Panc1 (cell line): ENCODE measurements at regions of chr3 and their contacts with region 1.

Region 1: GRCh38 chr3:156509189-156510174 is 45.4 kb downstream of the SSR3 start:
- DNase-seq: peak; percentile 30
- ATAC-seq: peak; percentile 88
- H3K4me3 ChIP-seq: no peak overlapping the region
- H3K27ac ChIP-seq: no peak overlapping the region
- H3K4me1 ChIP-seq: no peaks in the 10 kb centered on the region
- H3K27me3 ChIP-seq: peaks cover 3% of the 10 kb centered on the region; the same call in 1 of the 2 replicates
- CTCF ChIP-seq: peak; percentile 72

Region 2: DNA sequence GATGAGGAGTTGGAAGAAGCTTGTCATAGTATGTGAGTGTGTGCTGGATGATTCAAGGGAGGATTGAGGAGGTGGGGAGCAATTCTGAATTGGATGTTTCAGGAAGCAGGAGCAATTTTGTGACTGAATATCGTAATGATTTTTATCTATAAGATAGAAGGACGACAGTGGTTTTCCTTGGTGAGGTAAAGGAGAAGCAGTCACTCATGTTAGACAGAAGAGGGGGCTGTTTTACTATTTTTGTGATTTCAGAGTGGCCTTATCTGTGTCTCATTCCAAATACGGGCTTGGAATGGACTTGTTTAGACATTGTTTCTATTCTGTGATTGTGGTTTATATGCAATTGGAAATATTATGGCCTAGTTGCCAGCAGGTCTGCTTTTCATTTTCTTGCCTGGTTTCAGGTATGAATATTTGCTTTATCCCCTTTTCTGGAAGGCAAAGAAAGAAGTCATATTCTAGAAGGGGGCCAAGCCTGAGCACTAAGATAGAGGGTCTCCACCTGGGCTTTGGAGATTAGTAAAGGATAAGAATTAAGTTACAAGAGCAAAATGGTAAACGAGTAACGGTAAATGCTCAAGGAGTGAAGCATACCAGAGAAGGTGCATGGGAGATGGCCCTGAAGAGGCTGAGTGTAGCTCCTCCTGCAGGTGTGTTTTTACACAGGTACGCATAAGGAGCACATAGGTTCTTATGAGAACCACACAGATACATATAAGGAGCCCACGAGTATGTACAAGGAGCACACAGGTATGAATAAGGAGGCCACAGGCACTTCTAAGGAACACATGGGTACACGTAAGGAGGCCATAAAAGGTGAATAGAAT is 513.7 kb before region 1 on chr3:
- CTCF ChIA-PET with region 1: no interaction called
- POLR2A ChIA-PET with region 1: no interaction called
- in situ Hi-C with region 1: no loop called
- intact Hi-C with region 1: loop called (anchors 10 kb)
- DNase-seq: peak; percentile 5
- ATAC-seq: peak; percentile 93
- H3K4me3 ChIP-seq: no peak overlapping the region
- H3K27ac ChIP-seq: no peak overlapping the region
- H3K4me1 ChIP-seq: no peaks in the 10 kb centered on the region
- H3K27me3 ChIP-seq: peaks cover 6% of the 10 kb centered on the region
- CTCF ChIP-seq: peak; percentile 62

Region 3: DNA sequence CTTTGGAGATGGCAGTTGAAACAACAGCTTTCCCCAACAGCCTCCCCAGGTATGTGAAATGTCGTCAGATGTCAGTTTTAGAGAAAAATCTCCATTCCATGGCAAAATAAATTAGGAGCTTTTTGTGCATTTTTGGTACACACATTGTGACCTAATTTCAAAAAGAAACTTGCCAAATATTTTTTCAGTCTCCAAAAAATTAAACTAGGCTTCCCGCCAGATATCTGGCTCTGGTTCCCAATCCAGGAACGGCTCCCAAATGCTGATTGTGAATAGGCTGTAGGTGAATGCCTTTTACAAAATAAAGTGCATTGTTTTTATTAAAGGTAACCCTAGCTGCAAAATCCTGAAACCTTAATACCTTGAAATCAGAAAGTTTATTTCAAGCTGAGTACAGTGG is 378.2 kb before region 1 on chr3:
- CTCF ChIA-PET with region 1: no interaction called
- POLR2A ChIA-PET with region 1: no interaction called
- in situ Hi-C with region 1: no loop called
- intact Hi-C with region 1: no loop called
- DNase-seq: no peak
- ATAC-seq: no peak
- H3K4me3 ChIP-seq: no peak overlapping the region
- H3K27ac ChIP-seq: no peak overlapping the region
- H3K4me1 ChIP-seq: no peaks in the 10 kb centered on the region
- H3K27me3 ChIP-seq: peaks cover 3% of the 10 kb centered on the region; the same call in 1 of the 2 replicates
- CTCF ChIP-seq: no peak

Region 4: DNA sequence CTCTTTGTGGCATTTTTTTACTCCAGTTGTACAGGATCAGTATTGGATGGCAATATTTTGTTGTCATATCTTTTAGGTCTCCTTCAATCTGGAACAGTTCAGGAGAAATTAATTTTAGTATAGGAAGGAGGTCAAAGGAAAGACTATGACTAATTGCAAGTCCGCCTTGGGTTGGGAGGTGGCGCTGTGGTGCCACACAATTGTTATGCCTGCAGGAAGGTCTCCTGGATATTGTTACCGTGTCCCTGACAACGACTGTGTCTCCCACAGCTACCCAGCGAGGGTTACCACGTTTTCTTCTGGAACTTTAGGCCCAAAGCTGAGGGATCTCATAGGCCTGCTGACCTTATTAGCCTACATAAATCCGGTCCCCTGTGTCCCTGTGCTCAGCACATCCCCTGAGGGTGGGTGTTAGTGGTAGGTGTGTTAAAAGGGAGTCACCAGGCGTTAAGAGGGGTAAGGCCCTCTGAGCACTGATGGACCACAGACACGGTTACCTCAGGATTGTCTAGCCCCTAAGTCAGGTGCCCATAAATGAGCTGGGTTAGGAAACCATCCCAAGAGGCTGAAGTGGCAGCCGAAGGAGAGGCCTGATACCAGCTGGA is 357.6 kb before region 1 on chr3:
- CTCF ChIA-PET with region 1: interaction called, 9 read pairs
- POLR2A ChIA-PET with region 1: no interaction called
- in situ Hi-C with region 1: no loop called
- intact Hi-C with region 1: loop called (anchors 1 kb)
- DNase-seq: peak; percentile 28
- ATAC-seq: peak; percentile 85
- H3K4me3 ChIP-seq: no peak overlapping the region
- H3K27ac ChIP-seq: no peak overlapping the region
- H3K4me1 ChIP-seq: no peaks in the 10 kb centered on the region
- H3K27me3 ChIP-seq: no peaks in the 10 kb centered on the region
- CTCF ChIP-seq: peak; percentile 92

Region 5: DNA sequence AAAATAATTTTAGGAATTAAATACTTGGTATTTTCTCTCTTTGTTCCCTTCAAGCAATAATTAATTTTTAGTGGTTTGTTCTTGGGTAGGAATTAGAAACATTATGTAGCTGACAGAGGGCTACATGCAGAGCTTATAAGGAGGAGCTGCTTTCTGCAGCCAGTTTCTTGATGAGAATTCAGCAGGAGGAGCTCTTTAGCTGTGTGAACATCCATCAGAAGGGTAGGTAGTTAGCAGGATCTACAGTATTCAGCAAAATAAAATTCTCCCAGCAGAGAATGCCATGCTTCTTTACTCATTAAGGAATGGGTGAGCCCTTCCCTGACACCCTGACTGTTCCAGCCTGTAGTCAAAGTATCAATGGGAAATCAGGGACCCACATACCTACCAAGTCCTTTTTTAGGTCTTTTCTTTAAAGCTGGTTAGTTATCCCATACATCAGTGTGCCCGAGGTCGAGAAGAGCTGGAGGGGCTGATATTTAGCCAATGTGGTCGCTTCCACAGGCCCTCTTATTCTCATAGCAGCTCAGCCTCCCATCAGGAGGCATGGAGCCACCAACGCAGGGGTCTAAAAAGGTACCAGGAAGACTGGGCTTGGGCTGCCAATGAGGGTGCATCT is 335.1 kb before region 1 on chr3:
- CTCF ChIA-PET with region 1: interaction called, 3 read pairs
- POLR2A ChIA-PET with region 1: no interaction called
- in situ Hi-C with region 1: no loop called
- intact Hi-C with region 1: loop called (anchors 5 kb)
- DNase-seq: no peak
- ATAC-seq: 0 out of 2 replicates have a peak, but pooled peaks have one; percentile 58
- H3K4me3 ChIP-seq: no peak overlapping the region
- H3K27ac ChIP-seq: no peak overlapping the region
- H3K4me1 ChIP-seq: no peaks in the 10 kb centered on the region
- H3K27me3 ChIP-seq: peaks cover under 1% of the 10 kb centered on the region; the same call in 1 of the 2 replicates
- CTCF ChIP-seq: peak; percentile 32; the same call in 1 of the 2 replicates

Region 6: DNA sequence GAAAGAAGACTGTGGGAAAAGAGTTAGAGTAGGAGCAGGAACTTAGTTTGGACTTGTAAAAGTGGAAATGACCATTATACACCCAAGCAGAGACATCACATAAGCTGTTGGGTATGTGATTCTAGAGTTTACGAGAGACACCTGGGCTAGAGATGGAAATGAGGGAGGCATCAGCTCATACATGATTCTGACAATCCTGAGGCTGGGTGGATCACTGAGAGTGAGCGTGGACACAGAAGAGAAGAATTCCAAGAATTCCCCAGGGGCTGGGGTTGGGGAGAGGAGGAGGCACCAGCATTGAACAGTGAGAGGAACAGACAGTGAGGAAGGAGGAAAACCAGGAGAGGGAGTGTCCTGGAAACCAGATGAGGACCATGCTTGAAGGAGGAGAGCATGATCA is 275.6 kb before region 1 on chr3:
- CTCF ChIA-PET with region 1: no interaction called
- POLR2A ChIA-PET with region 1: interaction called, 12 read pairs
- in situ Hi-C with region 1: no loop called
- intact Hi-C with region 1: no loop called
- DNase-seq: no peak
- ATAC-seq: no peak
- H3K4me3 ChIP-seq: no peak overlapping the region
- H3K27ac ChIP-seq: no peak overlapping the region
- H3K4me1 ChIP-seq: no peaks in the 10 kb centered on the region
- H3K27me3 ChIP-seq: no peaks in the 10 kb centered on the region
- CTCF ChIP-seq: no peak